ENCODE measurements at regions of chr13 and their contacts with region 1.

Region 1: DNA sequence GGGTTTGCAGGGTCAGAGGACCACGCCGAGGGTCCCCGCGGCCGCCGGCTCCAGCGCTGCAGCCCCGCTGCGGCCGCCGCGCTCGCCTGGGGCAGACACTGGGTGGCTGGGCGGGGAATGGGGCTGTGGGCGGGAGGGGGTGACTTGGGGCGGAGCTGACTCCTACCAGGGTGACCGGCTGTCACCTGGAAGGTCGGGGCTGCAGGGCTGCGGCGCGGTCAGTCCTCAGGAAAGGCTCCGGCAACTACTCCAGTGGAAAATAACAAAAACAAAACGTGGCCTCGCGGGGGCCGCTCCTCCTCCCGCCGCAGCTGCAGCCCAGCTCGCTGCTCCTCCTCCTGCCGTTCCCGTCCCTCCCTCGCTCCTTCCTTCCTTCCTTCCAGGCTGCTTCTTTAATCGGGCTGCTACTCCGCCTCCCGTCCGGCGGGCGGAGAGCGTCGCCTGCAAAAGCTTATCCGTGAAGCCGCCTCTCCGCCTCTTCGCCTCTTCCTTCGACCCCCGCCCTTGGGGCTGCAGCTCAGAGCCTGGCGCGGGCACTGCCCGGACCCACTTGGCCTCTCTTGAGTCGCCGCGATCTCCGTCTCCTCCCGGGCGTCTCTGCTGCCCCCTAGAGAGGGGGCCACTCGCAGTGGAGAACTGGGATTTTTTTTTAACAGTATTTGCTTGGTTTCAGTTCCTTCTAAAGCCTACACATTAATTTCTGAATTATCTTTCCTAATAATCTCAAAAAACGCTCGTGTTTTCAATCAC is at the start of gene TBC1D4:
- DNase-seq: peak; percentile 86 to 92 (median 89)
- ATAC-seq: peak; percentile 84 to 91 (median 88)
- H3K4me3 ChIP-seq: peak within 1 kb of the TSS; percentile 80 to 95 (median 89)
- H3K27ac ChIP-seq: peak within 1 kb of the TSS; percentile 58 to 96 (median 89)
- H3K4me1 ChIP-seq: peaks cover 0 to 27% (median 11%) of the 10 kb centered on the region in 12 donors
- H3K27me3 ChIP-seq: peaks cover 0 to 7% (median 0%) of the 10 kb centered on the region in 9 donors
- CTCF ChIP-seq: peak; percentile 60 to 94 (median 84)
- POLR2A ChIP-seq: peak in 1 of 2 donors; percentile 71
- total RNA-seq, gene TBC1D4: 52.9 to 158 (median 85.6) TPM

Region 2: DNA sequence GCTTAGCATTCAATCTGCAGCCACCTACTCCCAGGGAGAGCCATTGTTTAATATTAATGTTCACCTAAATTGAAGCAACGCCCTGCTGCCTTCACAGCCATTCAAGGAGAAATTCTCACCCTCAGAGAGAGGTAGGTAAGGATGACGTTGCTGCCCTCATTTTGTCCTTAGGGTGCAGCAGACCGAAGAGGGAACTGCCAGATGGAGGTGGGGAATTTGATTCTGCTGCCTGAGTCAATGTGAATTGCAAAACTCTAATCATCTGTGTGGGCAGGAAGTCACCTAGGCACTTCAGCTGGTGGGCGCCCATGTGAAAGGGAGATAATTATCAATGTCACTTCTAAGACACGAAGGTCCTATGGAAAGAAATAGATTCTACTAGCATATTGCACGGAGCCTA is 503.6 kb before region 1 on chr13:
- intact Hi-C with region 1: no loop called
- DNase-seq: no peak
- ATAC-seq: no peak
- H3K4me3 ChIP-seq: no peak overlapping the region
- H3K27ac ChIP-seq: no peak overlapping the region
- H3K4me1 ChIP-seq: no peaks in the 10 kb centered on the region
- H3K27me3 ChIP-seq: no peaks in the 10 kb centered on the region
- CTCF ChIP-seq: no peak
- POLR2A ChIP-seq: no peak

Region 3: GRCh38 chr13:75365724-75366173 is 116.5 kb before region 1 on chr13:
- intact Hi-C with region 1: loop called in 7 of 10 experiments (anchors 2 to 5 kb)
- DNase-seq: no peak
- ATAC-seq: peak; percentile 37 to 76 (median 66)
- H3K4me3 ChIP-seq: peak overlapping the region in 9 of 12 donors; percentile 4 to 35 (median 21)
- H3K27ac ChIP-seq: peak overlapping the region; percentile 11 to 86 (median 72)
- H3K4me1 ChIP-seq: peaks cover 0 to 68% (median 34%) of the 10 kb centered on the region in 12 donors
- H3K27me3 ChIP-seq: no peaks in the 10 kb centered on the region
- CTCF ChIP-seq: peak in 1 of 12 donors; percentile 11
- POLR2A ChIP-seq: peak in 1 of 2 donors; percentile 15

Region 4: DNA sequence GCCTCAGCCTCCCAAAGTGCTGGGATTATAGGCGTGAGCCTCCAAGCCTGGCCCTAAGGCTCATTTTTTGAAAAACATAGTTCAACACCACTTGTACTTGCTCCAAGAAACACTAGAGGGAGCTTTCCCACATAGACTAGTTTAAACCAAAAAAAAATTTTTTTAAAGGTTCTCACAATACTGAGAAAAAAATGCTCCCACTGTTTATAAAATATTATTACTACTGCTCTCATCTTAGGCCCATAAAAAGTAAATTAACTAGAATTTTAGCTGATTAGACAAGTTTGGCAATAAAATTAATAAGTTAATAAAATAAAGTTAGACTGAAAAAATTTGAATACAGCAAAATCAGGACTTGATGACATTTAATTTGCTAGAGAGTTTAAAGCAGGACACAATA is 109.7 kb before region 1 on chr13:
- intact Hi-C with region 1: loop called (anchors 1 to 5 kb)
- DNase-seq: peak in 1 of 5 donors; percentile 25
- ATAC-seq: peak in 2 of 4 donors; percentile 38 to 47
- H3K4me3 ChIP-seq: peak overlapping the region in 1 of 12 donors; percentile 9
- H3K27ac ChIP-seq: peak overlapping the region; percentile 2 to 71 (median 58)
- H3K4me1 ChIP-seq: peaks cover 4 to 51% (median 25%) of the 10 kb centered on the region in 12 donors
- H3K27me3 ChIP-seq: no peaks in the 10 kb centered on the region
- CTCF ChIP-seq: peak; percentile 64 to 87 (median 76)
- POLR2A ChIP-seq: no peak

Region 5: GRCh38 chr13:75405976-75406703 is 76.1 kb before region 1 on chr13:
- intact Hi-C with region 1: loop called in 1 of 10 experiments (anchors 5 kb)
- DNase-seq: no peak
- ATAC-seq: peak in 3 of 4 donors; percentile 13 to 57 (median 38)
- H3K4me3 ChIP-seq: peak overlapping the region in 1 of 12 donors; percentile 8
- H3K27ac ChIP-seq: peak overlapping the region; percentile 19 to 86 (median 56)
- H3K4me1 ChIP-seq: peaks cover 0 to 46% (median 24%) of the 10 kb centered on the region in 12 donors
- H3K27me3 ChIP-seq: no peaks in the 10 kb centered on the region
- CTCF ChIP-seq: no peak
- POLR2A ChIP-seq: no peak

Region 6: DNA sequence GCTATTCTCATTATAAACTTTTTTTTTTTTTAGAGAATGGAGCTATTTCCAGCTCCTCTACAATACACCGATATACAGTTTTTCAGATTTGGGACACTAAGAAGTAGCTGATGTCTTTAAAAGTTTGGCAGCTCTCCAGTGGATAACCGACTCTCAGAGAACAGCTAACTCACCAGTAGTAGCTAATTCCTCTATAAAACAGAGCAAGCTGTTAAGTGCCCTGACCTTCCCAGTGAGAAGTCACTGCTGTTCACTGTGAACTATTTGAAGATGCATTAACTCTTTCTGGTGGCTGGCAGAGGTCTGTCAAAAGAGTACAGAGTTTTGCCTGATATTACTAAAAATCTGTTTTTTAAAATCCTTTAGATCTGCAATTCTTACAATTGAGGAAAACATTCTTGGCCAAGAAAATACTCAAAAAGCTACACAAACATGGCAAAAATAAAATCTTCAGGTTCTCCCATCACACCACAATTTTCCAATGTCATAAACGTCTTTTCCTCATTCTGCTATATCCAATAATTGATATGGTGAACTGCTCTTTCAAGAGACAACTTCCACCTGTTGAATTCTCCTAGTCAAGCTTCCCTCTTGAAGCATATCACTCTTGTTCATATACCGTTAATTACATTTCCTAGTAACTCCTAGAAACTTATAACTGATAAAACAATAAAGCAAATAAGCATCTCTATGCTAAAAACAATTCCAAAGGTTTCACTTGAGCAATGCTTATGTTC is 44.5 kb before region 1 on chr13:
- intact Hi-C with region 1: loop called in 2 of 10 experiments (anchors 5 kb)
- DNase-seq: no peak
- ATAC-seq: peak in 3 of 4 donors; percentile 65 to 86 (median 69)
- H3K4me3 ChIP-seq: peak overlapping the region in 2 of 12 donors; percentile 8 to 9
- H3K27ac ChIP-seq: peak overlapping the region in 10 of 12 donors; percentile 28 to 77 (median 58)
- H3K4me1 ChIP-seq: peaks cover 0 to 52% (median 26%) of the 10 kb centered on the region in 12 donors
- H3K27me3 ChIP-seq: no peaks in the 10 kb centered on the region
- CTCF ChIP-seq: no peak
- POLR2A ChIP-seq: no peak

Region 7: GRCh38 chr13:75537401-75538365 is 55.4 kb after region 1 on chr13 and contains the start of gene COMMD6:
- intact Hi-C with region 1: loop called in 7 of 10 experiments (anchors 5 to 10 kb)
- DNase-seq: peak; percentile 82 to 89 (median 87)
- ATAC-seq: peak; percentile 94 to 97 (median 96)
- H3K4me3 ChIP-seq: peak within 1 kb of the TSS; percentile 56 to 96 (median 85)
- H3K27ac ChIP-seq: peak within 1 kb of the TSS; percentile 11 to 92 (median 79)
- H3K4me1 ChIP-seq: peaks cover 0 to 30% (median 10%) of the 10 kb centered on the region in 12 donors
- H3K27me3 ChIP-seq: no peaks in the 10 kb centered on the region
- CTCF ChIP-seq: peak; percentile 29 to 82 (median 57)
- POLR2A ChIP-seq: peak in 1 of 2 donors; percentile 53
- total RNA-seq, gene COMMD6: 19.8 to 155 (median 126) TPM

Region 8: DNA sequence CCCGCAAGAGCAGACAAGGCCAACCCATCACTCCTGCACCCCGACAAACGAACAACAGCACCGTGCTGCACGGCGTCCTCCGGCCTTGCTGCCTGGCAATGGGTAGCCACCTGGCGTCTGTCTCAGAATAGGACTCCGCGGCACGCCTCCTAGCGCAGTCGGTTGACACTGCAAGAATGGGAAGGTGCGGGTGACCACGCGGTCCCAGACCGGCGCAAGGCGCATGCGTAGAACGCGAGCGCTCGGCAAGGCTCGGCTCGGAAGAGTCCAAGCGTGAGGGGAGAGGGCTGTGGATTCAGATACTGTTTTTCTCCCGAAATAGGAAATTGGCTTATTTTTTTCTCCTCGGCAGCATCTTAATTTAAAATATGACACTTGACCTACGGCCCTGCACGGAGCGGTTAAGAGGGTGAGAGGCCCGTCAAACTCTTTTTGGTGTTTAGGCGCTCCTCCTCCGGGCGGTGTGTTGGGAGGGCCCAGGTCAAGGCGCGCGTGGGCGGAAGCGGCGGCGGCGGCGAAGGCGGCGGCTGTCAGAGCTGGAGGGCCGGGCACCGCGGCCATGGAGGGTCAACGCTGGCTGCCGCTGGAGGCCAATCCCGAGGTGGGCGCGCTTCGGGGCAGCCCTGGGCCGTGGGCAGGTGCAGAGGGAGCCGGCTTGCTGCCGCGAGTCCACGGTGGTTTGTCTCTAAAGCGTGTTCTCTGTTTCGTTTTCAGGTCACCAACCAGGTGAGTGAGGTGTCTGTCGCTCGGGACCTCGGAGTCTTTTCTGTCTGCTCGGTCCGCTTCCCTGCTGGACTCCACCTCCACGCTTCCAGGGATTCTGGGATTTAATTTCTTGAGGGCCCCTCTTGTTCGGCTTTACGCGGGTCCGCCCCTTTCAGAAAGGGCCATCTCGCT is 67.3 kb after region 1 on chr13 and contains the start of gene UCHL3:
- intact Hi-C with region 1: loop called in 3 of 10 experiments (anchors 5 to 10 kb)
- DNase-seq: peak; percentile 95 to 99 (median 97)
- ATAC-seq: peak; percentile 96 to 99 (median 98)
- H3K4me3 ChIP-seq: peak within 1 kb of the TSS; percentile 61 to 99 (median 87)
- H3K27ac ChIP-seq: peak within 1 kb of the TSS; percentile 64 to 95 (median 84)
- H3K4me1 ChIP-seq: peaks cover 0 to 16% (median 10%) of the 10 kb centered on the region in 12 donors
- H3K27me3 ChIP-seq: no peaks in the 10 kb centered on the region
- CTCF ChIP-seq: peak; percentile 74 to 99 (median 87)
- POLR2A ChIP-seq: peak in 1 of 2 donors; percentile 68
- total RNA-seq, gene UCHL3: 16.3 to 52.8 (median 27.6) TPM

Region 9: GRCh38 chr13:75656425-75656989 is 174.3 kb after region 1 on chr13:
- intact Hi-C with region 1: no loop called
- DNase-seq: no peak
- ATAC-seq: no peak
- H3K4me3 ChIP-seq: no peak overlapping the region
- H3K27ac ChIP-seq: no peak overlapping the region
- H3K4me1 ChIP-seq: no peaks in the 10 kb centered on the region
- H3K27me3 ChIP-seq: no peaks in the 10 kb centered on the region
- CTCF ChIP-seq: no peak
- POLR2A ChIP-seq: no peak

Measured in heart left ventricle (tissue), 16 donors.